ENCODE measurements at regions of chr12 and their contacts with region 1.

Region 1: GRCh38 chr12:52372216-52373154 is 5.2 kb upstream of the KRT85 start:
- DNase-seq: peak; percentile 75 to 81
- ATAC-seq: peak; percentile 77 to 89 (median 84)
- H3K4me3 ChIP-seq: no peak overlapping the region
- H3K27ac ChIP-seq: peak overlapping the region in 1 of 10 donors; percentile 28
- H3K4me1 ChIP-seq: no peaks in the 10 kb centered on the region
- H3K27me3 ChIP-seq: peaks cover 0 to 28% (median 12%) of the 10 kb centered on the region in 7 donors
- CTCF ChIP-seq: peak; percentile 47 to 84 (median 75)

Region 2: DNA sequence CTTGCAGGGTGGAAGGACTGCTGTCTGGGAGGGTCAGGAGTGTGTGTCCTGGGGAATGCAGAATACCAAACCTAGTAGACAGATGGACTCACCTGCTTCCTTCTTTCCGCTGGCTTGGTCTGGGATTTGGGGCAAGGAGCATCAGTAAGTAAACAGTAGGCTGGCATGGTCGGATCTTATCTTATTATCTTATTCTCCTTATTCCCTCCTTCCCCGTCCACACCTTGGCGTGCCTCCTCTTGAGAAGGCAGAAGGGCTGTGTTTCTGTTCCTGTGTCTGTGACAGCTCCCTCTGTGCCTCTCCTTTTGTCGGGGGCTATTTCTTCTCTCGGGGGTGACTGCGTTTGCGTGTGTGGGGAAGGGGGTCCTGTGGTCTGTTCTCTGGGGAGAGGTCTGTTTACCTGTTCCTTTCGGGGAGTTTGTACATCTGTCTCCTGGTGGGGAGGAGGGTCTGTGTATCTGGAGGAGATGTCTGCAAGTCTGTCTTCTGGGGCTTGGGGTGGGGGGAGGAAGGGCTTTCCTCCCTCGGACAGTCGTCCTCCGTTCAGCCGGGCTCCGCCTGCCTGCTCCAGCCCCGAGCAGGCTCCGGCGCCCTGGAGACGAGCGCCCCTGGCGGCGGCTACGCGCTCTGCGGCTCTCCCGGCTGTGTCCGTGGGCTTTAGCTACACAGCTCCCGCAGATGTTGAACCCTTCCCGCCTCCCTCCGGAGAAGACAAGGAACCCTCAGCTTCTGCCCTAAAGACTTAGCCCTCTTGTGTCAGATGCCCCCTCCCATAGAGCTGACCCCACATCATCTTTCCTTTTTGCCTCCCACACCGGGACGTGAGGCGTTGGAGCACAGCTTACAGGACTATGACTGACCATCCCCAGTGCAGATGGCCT is 93.7 kb before region 1 on chr12:
- intact Hi-C with region 1: no loop called
- DNase-seq: peak; percentile 62 to 82
- ATAC-seq: peak; percentile 88 to 96 (median 92)
- H3K4me3 ChIP-seq: no peak overlapping the region
- H3K27ac ChIP-seq: no peak overlapping the region
- H3K4me1 ChIP-seq: peaks cover 0 to 32% (median 10%) of the 10 kb centered on the region in 9 donors
- H3K27me3 ChIP-seq: peaks cover 0 to 49% (median 24%) of the 10 kb centered on the region in 7 donors
- CTCF ChIP-seq: peak; percentile 91 to 99 (median 98)

Region 3: DNA sequence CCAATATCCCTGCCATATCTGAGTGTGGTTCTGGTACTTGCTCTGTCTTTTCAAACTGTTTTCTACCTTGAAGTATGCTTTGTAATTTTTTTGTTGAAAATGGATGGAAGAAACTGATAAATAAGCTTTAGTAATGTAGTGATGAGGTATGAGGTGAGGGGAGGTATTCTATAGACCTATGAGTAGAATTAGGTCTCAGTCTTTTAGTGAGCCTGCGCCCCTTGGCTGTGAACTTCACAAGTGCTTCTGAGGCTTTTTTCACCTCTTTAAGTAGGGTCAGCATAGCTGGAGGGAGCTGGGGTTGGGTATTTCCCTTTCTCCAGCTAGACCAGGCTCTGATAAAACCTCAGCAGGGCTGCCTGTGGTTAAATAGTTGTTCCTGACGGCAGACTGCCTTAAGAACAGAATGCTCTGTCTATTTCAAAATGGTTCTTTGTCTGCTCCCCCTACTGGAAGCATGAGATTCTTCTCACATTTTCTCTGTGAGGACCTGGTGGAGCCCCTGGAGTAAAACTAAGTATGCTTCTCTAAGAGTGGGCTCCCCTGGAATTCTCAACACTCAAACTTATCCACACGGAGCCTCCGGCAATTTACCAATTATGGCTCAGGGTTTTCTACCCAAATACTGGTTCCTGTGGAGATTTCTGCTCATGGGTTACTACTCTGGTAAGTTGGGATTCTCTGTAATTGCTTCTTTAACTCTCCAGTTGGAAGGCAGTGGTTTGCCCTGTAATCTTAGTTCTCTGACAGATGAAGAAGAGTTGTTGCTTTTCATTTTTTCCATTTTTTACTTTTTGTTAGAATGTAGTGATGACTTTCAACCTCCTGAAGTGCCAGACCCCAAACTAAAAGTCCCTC is 134.6 kb after region 1 on chr12:
- intact Hi-C with region 1: loop called in 7 of 10 experiments (anchors 2 to 10 kb)
- DNase-seq: no peak
- ATAC-seq: peak in 4 of 8 donors; percentile 31 to 62 (median 40)
- H3K4me3 ChIP-seq: no peak overlapping the region
- H3K27ac ChIP-seq: no peak overlapping the region
- H3K4me1 ChIP-seq: peaks cover 0 to 5% (median 0%) of the 10 kb centered on the region in 9 donors
- H3K27me3 ChIP-seq: peaks cover 0 to 36% (median 28%) of the 10 kb centered on the region in 7 donors
- CTCF ChIP-seq: peak; percentile 20 to 69 (median 55)

Region 4: GRCh38 chr12:52582971-52583456 is 210.5 kb after region 1 on chr12:
- intact Hi-C with region 1: loop called in 1 of 10 experiments (anchors 5 kb)
- DNase-seq: peak in 1 of 2 donors; percentile 58
- ATAC-seq: peak; percentile 39 to 83 (median 77)
- H3K4me3 ChIP-seq: no peak overlapping the region
- H3K27ac ChIP-seq: no peak overlapping the region
- H3K4me1 ChIP-seq: no peaks in the 10 kb centered on the region
- H3K27me3 ChIP-seq: peaks cover 0 to 14% (median 6%) of the 10 kb centered on the region in 7 donors
- CTCF ChIP-seq: peak; percentile 43 to 73 (median 69)

Region 5: GRCh38 chr12:52860063-52860823 is 487.8 kb after region 1 on chr12:
- intact Hi-C with region 1: loop called in 1 of 10 experiments (anchors 5 kb)
- DNase-seq: no peak
- ATAC-seq: peak in 6 of 8 donors; percentile 50 to 94 (median 73)
- H3K4me3 ChIP-seq: no peak overlapping the region
- H3K27ac ChIP-seq: no peak overlapping the region
- H3K4me1 ChIP-seq: peaks cover 0 to 3% (median 0%) of the 10 kb centered on the region in 9 donors
- H3K27me3 ChIP-seq: peaks cover 0 to 7% (median 0%) of the 10 kb centered on the region in 7 donors
- CTCF ChIP-seq: no peak

Region 6: DNA sequence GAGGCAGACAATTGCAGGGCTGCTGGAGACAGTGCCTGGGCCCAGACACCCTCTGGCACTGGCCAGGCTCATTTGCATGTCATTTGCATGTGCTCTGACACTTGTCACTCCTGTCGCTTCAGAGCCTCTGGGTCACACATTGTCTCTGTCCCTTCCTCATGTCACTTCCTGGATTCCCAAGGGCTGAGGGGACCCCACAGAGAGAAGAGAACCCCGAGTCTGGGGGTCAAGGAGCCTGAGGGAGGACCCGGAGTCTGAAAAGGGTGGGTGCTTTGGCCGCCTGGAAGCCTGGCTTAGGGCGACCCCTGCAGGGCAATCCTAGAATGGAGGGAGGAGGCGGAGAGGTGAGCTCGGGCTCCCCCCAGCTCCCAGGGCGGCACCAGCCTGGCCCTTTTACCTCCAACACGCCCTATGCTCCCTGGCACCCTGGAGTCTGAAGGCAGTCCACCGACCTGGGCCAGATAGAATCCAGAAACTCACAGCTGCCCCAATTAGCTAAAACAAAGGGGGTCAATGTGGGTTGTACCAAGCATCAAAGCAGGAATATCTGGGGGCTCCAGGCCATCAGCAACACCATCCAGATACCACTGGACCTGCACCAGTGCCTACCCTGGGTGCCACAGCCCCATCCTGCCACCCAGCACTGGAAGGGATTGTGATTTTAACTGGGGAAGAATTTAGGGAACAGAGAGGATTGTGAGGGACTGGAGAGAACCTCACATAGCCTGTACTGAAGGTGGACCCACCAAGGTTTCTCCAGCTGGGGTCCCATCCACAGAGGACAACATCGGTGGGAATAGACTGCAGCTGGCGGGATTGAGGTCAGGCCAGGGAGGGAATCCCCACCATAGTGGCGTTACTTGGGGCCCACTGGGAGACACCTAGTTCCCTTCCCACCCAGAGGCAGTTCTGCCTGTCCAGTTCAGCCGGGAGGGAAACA is 498.1 kb after region 1 on chr12:
- intact Hi-C with region 1: loop called in 3 of 10 experiments (anchors 2 to 10 kb)
- DNase-seq: peak; percentile 41 to 69
- ATAC-seq: peak in 7 of 8 donors; percentile 4 to 49 (median 41)
- H3K4me3 ChIP-seq: no peak overlapping the region
- H3K27ac ChIP-seq: peak overlapping the region in 6 of 10 donors; percentile 4 to 76 (median 10)
- H3K4me1 ChIP-seq: peaks cover 3 to 43% (median 21%) of the 10 kb centered on the region in 9 donors
- H3K27me3 ChIP-seq: no peaks in the 10 kb centered on the region
- CTCF ChIP-seq: peak; percentile 40 to 79 (median 66)

Region 7: GRCh38 chr12:52879394-52880351 is 507.2 kb after region 1 on chr12:
- intact Hi-C with region 1: loop called in 9 of 10 experiments (anchors 2 to 10 kb)
- DNase-seq: peak; percentile 76 to 89
- ATAC-seq: peak; percentile 85 to 93 (median 90)
- H3K4me3 ChIP-seq: peak overlapping the region in 8 of 10 donors; percentile 4 to 36 (median 24)
- H3K27ac ChIP-seq: no peak overlapping the region
- H3K4me1 ChIP-seq: peaks cover 0 to 20% (median 12%) of the 10 kb centered on the region in 9 donors
- H3K27me3 ChIP-seq: peaks cover 0 to 25% (median 17%) of the 10 kb centered on the region in 7 donors
- CTCF ChIP-seq: peak; percentile 58 to 77 (median 65)

Region 8: DNA sequence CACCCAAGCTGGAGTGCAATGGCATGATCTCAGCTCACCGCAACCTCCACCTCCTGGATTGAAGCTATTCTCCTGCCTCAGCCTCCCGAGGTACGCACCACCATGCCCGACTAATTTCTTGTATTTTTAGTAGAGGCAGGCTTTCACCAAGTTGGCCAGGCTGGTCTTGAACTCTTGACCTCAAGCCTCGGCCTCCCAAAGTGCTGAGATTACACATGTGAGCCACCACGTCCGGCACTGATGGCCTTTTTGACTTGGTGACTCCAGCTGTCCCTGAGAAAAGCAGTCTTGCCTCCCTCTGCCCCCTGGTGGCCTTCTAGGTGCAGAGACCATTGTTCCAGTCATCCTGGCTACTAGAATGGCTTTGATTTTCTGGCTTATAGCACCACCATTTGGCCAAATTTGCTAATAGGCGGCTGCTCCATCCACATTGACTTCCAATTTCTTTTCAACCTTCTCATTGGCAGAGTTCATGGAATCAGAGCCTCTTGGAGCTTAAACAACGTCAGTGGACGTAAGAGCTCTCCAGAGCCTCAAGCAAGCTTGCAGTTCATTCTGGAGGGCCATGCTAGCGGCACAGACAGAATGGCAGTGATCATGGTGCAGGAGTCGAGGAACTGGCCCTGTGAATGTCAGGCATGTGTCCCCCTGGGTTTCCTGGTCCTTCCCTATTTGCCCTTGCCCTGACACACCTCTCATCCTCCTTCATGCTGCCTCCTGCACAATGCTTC is 608.4 kb after region 1 on chr12:
- intact Hi-C with region 1: loop called in 6 of 10 experiments (anchors 5 to 10 kb)
- DNase-seq: peak; percentile 82 to 92
- ATAC-seq: peak; percentile 89 to 97 (median 93)
- H3K4me3 ChIP-seq: no peak overlapping the region
- H3K27ac ChIP-seq: no peak overlapping the region
- H3K4me1 ChIP-seq: no peaks in the 10 kb centered on the region
- H3K27me3 ChIP-seq: peaks cover 0 to 32% (median 11%) of the 10 kb centered on the region in 7 donors
- CTCF ChIP-seq: peak; percentile 90 to 100 (median 97)

Measured in heart right ventricle (tissue), 16 donors.